ENCODE measurements at regions of chr20 and their contacts with region 1.

Region 1: DNA sequence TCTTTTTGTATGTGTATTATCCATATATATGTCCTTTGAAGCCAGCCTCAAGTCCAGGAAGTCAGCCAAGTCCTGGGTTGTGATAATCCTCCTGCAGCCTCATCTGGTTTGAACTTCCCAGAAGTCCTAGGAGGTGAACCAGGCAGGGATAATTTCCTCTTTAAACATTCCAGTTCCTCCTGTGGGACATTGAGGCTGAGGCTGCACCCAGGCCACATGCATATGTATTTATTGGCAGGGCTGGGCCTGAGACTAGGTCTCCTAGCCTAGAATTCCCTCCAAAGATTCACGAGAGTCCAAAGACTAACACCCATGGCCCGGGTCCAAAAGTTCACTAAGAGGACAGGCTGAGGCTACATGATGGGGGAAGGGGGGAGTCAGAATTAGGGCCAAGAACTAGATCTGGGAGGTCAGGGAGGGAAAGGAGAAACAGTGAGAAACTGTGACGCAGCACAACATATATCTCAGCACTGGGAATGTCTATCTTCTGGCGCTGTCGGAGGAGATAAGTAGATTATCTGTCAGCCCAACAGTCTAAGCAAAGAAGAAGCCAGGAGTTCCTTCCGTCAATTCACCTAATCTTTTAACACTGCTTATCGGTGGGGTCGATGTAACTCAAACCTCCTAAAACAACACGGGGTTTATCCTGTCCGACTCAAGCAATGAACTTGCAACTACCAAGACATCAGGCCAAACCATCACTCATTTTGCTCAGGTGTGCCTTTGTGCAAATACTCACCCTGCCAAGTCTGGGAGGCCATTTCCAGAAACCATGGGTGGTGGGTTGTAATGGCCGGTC is 43.3 kb downstream of the SNX5 start:
- DNase-seq: no peak
- H3K4me3 ChIP-seq: no peak overlapping the region
- H3K27ac ChIP-seq: no peak overlapping the region
- H3K4me1 ChIP-seq: no peaks in the 10 kb centered on the region
- H3K27me3 ChIP-seq: no peaks in the 10 kb centered on the region
- CTCF ChIP-seq: no peak

Region 2: DNA sequence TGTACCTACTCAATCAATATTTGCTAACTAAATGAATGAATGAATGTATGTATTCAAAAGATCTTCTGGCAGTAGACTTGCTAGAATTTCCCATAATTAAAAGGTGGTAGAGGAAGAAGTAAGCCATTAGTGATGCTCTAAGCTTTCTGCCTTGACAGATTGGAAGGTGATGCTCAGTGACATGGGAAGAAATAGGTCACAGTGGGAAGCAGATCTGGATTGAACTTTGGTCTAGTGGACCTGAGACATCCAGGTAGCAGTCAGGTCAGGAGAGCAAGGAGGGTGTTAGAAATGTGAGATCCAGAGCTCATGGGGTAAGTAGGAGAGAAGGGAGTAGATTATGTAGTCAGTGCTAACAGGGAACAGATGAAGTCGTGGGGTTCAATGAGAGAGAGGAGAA is 63.2 kb before region 1 on chr20:
- CTCF ChIA-PET with region 1: no interaction called
- POLR2A ChIA-PET with region 1: interaction called, 13 read pairs
- intact Hi-C with region 1: no loop called
- DNase-seq: no peak
- H3K4me3 ChIP-seq: no peak overlapping the region
- H3K27ac ChIP-seq: no peak overlapping the region
- H3K4me1 ChIP-seq: no peaks in the 10 kb centered on the region
- H3K27me3 ChIP-seq: no peaks in the 10 kb centered on the region
- CTCF ChIP-seq: no peak

Region 3: DNA sequence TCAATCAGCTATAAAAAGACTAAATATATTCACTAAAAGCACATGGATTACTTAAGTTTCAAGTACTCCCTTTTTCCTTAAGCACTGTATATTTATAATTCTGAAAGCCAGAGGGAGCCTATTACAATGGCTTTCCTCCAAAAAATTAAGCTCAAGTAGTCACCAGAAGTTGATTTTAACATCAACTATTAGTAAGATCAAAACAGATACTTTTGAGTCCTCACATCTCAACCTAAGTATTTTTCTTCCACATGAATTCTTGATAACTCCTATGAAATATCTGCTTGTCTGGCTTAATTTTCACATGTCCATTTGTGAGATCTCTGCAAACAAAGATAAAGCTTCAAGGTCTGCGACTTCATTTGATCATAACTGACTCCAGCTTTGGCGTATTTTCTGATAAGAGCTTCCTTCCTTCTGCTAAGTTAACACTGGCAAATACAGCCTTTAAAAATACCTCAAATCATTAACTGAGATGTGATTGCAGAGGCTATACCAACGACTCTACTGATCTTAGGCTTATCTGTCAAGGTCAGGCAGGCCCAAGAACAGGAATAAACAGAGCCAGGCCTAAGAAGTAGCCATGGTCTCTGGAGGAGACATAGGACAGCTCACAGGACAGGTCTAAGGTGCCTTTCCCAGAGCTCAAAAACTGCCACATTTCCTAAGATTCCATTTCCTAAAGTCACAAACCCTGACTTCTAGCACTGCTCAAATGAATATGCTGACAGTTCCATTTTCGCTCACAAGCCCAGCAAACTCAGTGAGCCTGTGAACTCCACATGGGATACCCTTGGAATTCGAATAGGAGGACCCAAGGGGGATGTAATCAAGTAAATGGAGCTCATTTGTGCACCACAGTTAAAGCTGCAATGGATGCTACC is 33.3 kb after region 1 on chr20:
- CTCF ChIA-PET with region 1: no interaction called
- POLR2A ChIA-PET with region 1: no interaction called
- intact Hi-C with region 1: no loop called
- DNase-seq: no peak
- H3K4me3 ChIP-seq: no peak overlapping the region
- H3K27ac ChIP-seq: peak overlapping the region; percentile 27
- H3K4me1 ChIP-seq: peaks cover 13% of the 10 kb centered on the region
- H3K27me3 ChIP-seq: no peaks in the 10 kb centered on the region
- CTCF ChIP-seq: no peak

Measured in PC-9 (cell line).